A549 (cell line): ENCODE measurements at regions of chr11 and their contacts with region 1.

Region 1: GRCh38 chr11:107770551-107770951 is 58.7 kb upstream of the SLN start:
- DNase-seq: no peak
- ATAC-seq: peak in 1 of 2 experiments; percentile 26; a peak in 2 of 6 replicates
- H3K4me3 ChIP-seq: no peak overlapping the region
- H3K27ac ChIP-seq: no peak overlapping the region
- H3K4me1 ChIP-seq: no peaks in the 10 kb centered on the region
- CTCF ChIP-seq: no peak
- EP300 ChIP-seq: no peak
- POLR2A ChIP-seq: no peak
- RAD21 ChIP-seq: no peak

Region 2: DNA sequence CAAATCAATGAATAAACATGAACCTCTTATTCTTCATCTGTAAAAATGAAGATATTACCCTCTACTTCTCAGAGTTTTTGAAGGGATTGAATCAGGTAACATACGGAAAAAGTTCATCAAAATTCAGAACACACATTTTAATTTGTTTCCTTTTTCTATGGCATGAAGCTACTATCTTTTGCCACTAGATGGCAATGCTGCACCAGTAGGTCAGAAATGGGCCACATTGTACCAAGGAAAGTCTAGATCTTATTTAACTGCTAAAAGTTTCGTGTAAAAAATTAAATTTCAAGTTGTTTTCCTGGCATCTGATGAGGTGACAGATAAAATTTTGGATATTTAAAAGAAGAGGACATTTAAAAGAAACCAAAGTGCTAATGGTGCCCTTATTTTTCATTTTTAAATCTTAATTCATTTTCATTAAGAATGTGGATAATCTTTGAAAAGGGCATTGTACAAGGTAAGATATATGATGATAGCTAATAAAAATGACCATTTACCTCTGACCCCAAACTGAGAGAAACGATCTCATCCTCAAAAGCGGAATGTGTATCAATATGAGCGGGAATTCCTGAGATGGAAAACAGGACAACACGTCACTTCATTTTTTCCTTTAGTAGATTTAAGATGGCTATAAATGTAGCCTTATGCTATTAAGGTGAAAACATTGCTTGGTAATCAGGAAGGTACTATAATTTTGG is 221.1 kb before region 1 on chr11:
- CTCF ChIA-PET with region 1: interaction called, 12 read pairs
- POLR2A ChIA-PET with region 1: no interaction called
- DNase-seq: peak in 1 of 2 experiments; percentile 25
- ATAC-seq: 0 out of 6 replicates have a peak, but pooled peaks of 1 of the 2 experiments have one; percentile 44
- H3K4me3 ChIP-seq: no peak overlapping the region
- H3K27ac ChIP-seq: no peak overlapping the region
- H3K4me1 ChIP-seq: no peaks in the 10 kb centered on the region
- CTCF ChIP-seq: peak; percentile 73
- EP300 ChIP-seq: no peak
- POLR2A ChIP-seq: no peak
- RAD21 ChIP-seq: peak; percentile 76 to 77

Region 3: GRCh38 chr11:107565219-107565937 is 205.2 kb before region 1 on chr11 and contains the start of gene ALKBH8:
- CTCF ChIA-PET with region 1: interaction called, 33 read pairs
- POLR2A ChIA-PET with region 1: no interaction called
- DNase-seq: peak; percentile 52 to 58
- ATAC-seq: peak; percentile 90 to 95
- H3K4me3 ChIP-seq: peak within 1 kb of the TSS; percentile 75
- H3K27ac ChIP-seq: peak within 1 kb of the TSS; percentile 89 to 94
- H3K4me1 ChIP-seq: peaks cover 47% of the 10 kb centered on the region
- CTCF ChIP-seq: no peak
- EP300 ChIP-seq: no peak
- POLR2A ChIP-seq: no peak; the same call in 1 of the 2 replicates
- RAD21 ChIP-seq: no peak
- polyA plus RNA-seq, gene ALKBH8: 7.1 and 10.8 TPM in 2 replicates

Region 4: DNA sequence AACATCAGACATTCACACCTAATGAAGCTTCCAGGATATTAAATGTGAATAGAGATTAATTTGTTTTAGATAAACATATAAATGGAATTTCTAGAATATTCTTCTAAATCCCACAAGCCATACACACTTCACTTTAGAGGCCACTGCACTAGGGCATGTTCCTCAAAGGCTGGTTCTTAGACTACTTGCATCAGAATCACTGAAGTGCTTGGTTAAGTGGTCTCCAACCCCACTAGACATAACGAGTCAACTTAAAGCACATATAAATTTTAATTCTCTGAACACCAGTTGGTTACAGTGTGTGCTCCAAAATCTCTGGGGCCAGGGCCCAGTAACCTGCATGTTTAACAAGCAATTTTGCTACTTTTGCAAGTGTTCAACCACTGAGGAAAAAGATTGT is 197.1 kb before region 1 on chr11:
- CTCF ChIA-PET with region 1: interaction called, 56 read pairs
- POLR2A ChIA-PET with region 1: no interaction called
- DNase-seq: no peak
- ATAC-seq: no peak
- H3K4me3 ChIP-seq: no peak overlapping the region
- H3K27ac ChIP-seq: no peak overlapping the region
- H3K4me1 ChIP-seq: no peaks in the 10 kb centered on the region
- CTCF ChIP-seq: no peak
- EP300 ChIP-seq: no peak
- POLR2A ChIP-seq: no peak
- RAD21 ChIP-seq: no peak

Region 5: GRCh38 chr11:107689317-107690202 is 81.0 kb before region 1 on chr11:
- CTCF ChIA-PET with region 1: interaction called, 29 read pairs
- POLR2A ChIA-PET with region 1: no interaction called
- DNase-seq: peak; percentile 34 to 47
- ATAC-seq: peak; percentile 90 to 94
- H3K4me3 ChIP-seq: no peak overlapping the region
- H3K27ac ChIP-seq: peak overlapping the region in 1 of 2 experiments; percentile 50; a peak in 2 of 6 replicates
- H3K4me1 ChIP-seq: peaks cover 20% of the 10 kb centered on the region; the same call in 1 of the 3 replicates
- CTCF ChIP-seq: peak; percentile 83
- EP300 ChIP-seq: no peak
- POLR2A ChIP-seq: no peak
- RAD21 ChIP-seq: peak; percentile 87 to 90

Region 6: DNA sequence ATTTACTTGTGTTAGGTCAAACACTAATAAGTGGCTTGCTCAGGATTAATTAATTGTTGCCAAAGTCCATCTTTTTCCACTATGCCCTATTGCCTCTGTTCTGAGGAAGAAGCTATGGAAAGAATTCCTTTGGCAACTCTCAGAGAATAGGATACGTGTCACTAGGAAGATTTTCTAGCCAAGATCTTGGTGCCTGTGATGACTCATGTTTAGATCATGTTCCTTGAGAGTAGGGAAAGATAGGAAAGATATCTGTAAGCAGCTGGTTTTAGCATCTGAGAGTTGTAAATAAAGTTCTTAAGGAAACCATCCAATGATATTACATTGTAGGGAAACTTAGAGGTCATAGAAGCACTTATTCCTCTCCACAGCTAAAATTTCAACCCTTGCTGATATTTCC is 74.4 kb before region 1 on chr11:
- CTCF ChIA-PET with region 1: interaction called, 10 read pairs
- POLR2A ChIA-PET with region 1: no interaction called
- DNase-seq: peak; percentile 35 to 71
- ATAC-seq: peak; percentile 94 to 95
- H3K4me3 ChIP-seq: no peak overlapping the region
- H3K27ac ChIP-seq: peak overlapping the region; percentile 67 to 68
- H3K4me1 ChIP-seq: peaks cover 25% of the 10 kb centered on the region
- CTCF ChIP-seq: no peak
- EP300 ChIP-seq: no peak
- POLR2A ChIP-seq: no peak
- RAD21 ChIP-seq: no peak

Region 7: GRCh38 chr11:107731941-107732688 is 38.4 kb before region 1 on chr11:
- CTCF ChIA-PET with region 1: no interaction called
- POLR2A ChIA-PET with region 1: no interaction called
- DNase-seq: no peak
- ATAC-seq: peak in 1 of 2 experiments; percentile 39; a peak in 2 of 6 replicates
- H3K4me3 ChIP-seq: no peak overlapping the region
- H3K27ac ChIP-seq: peak overlapping the region; percentile 18 to 33; a peak in 4 of 6 replicates
- H3K4me1 ChIP-seq: peaks cover 18% of the 10 kb centered on the region
- CTCF ChIP-seq: no peak
- EP300 ChIP-seq: no peak
- POLR2A ChIP-seq: no peak
- RAD21 ChIP-seq: no peak

Region 8: GRCh38 chr11:107757661-107758060 is 12.9 kb before region 1 on chr11:
- CTCF ChIA-PET with region 1: interaction called, 12 read pairs
- POLR2A ChIA-PET with region 1: no interaction called
- DNase-seq: no peak
- ATAC-seq: 0 out of 6 replicates have a peak, but pooled peaks of 1 of the 2 experiments have one; percentile 42
- H3K4me3 ChIP-seq: no peak overlapping the region
- H3K27ac ChIP-seq: no peak overlapping the region
- H3K4me1 ChIP-seq: no peaks in the 10 kb centered on the region
- CTCF ChIP-seq: no peak
- EP300 ChIP-seq: no peak
- POLR2A ChIP-seq: no peak
- RAD21 ChIP-seq: peak in 1 of 2 experiments; percentile 19; a peak in 1 of 5 replicates

Region 9: GRCh38 chr11:107799218-107799859 is 28.8 kb after region 1 on chr11:
- CTCF ChIA-PET with region 1: no interaction called
- POLR2A ChIA-PET with region 1: no interaction called
- DNase-seq: peak; percentile 36 to 56
- ATAC-seq: peak; percentile 82 to 88
- H3K4me3 ChIP-seq: no peak overlapping the region
- H3K27ac ChIP-seq: no peak overlapping the region
- H3K4me1 ChIP-seq: no peaks in the 10 kb centered on the region
- CTCF ChIP-seq: peak; percentile 53
- EP300 ChIP-seq: no peak
- POLR2A ChIP-seq: no peak
- RAD21 ChIP-seq: peak; percentile 42 to 55; a peak in 3 of 5 replicates

Region 10: DNA sequence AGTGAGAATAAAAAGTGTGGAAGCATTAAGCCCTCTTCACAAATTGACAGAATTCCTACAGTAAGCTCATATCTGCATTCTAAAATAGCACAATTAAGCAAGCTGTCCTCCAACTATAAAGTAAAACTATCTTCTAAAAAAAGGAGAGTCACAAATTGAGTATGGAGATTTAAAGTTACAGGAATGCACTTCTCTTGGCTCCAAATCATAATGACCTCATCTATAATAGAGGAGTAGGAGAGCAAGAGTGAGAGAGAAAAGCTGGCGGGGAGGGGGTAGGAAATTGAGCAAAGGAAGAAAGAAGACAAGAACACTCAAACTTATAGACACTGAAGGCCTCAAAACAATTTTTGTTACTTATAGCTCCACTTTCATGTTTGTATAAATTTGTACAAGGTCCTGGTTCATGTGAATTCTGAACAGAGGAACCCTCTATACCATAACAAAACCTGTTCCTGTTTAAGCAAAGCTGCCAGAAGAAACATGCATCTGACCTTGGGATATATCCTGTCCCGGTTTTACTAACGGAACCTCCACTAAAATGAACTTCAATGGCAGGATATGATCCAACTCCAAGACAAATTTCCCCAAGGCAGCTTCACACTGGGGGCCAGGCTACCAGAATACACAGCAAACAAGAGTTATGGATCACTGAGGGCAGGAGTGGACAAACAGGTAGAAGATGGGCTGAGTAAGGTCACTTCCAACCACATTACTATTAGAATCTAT is 50.8 kb after region 1 on chr11:
- CTCF ChIA-PET with region 1: no interaction called
- POLR2A ChIA-PET with region 1: no interaction called
- DNase-seq: no peak
- ATAC-seq: no peak
- H3K4me3 ChIP-seq: no peak overlapping the region
- H3K27ac ChIP-seq: no peak overlapping the region
- H3K4me1 ChIP-seq: peaks cover 7% of the 10 kb centered on the region; the same call in 1 of the 3 replicates
- CTCF ChIP-seq: no peak
- EP300 ChIP-seq: no peak
- POLR2A ChIP-seq: no peak
- RAD21 ChIP-seq: no peak